ENCODE measurements at regions of chr10 and their contacts with region 1.

Region 1: DNA sequence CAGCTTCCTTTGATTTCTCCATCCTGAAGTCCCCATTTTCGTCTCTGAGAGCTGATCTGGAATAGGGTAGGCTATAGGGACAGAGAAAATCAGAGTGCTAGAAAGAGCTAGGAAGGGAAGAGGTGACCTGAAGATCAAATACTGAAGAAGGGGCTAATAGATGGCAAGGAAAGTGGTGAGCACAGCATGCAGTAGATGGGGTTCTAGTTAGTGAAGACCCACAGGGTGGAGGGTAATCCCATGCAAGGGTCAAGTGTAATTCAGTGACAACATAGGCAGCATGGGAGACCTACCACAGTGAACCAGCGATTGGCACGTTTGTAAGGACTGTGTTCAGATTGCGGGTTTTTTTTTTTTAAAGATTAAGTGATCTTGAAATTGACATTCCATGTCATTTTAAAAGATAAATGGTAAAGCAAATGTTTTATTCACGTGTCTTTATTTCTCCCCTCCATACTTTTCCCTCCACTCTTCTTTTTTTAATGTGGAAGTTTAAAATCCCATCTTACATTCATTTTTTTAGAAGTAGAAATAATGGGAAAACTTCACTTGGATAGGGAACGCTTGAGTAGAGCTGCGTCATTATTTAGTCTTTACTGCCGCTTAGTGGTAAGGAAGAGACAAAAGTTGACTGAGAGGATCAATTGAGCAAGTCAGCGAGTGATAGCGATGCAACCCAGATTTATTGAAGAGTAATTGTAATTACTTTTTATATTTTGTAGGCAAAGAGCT is 21.0 kb upstream of the ABI1 start:
- DNase-seq: no peak
- ATAC-seq: peak; percentile 94
- H3K4me3 Mint-ChIP-seq: peak overlapping the region; percentile 41
- H3K27ac Mint-ChIP-seq: peak overlapping the region; percentile 17; the same call in 1 of the 2 replicates
- H3K4me1 Mint-ChIP-seq: no peaks in the 10 kb centered on the region
- H3K27me3 Mint-ChIP-seq: no peaks in the 10 kb centered on the region
- CTCF ChIP-seq: peak; percentile 31; the same call in 1 of the 2 replicates

Region 2: GRCh38 chr10:26931223-26931622 is 49.5 kb after region 1 on chr10:
- CTCF ChIA-PET with region 1: no interaction called
- POLR2A ChIA-PET with region 1: no interaction called
- DNase-seq: peak; percentile 80
- ATAC-seq: peak; percentile 99
- H3K4me3 Mint-ChIP-seq: peak overlapping the region; percentile 60
- H3K27ac Mint-ChIP-seq: no peak overlapping the region
- H3K4me1 Mint-ChIP-seq: peaks cover 10% of the 10 kb centered on the region
- H3K27me3 Mint-ChIP-seq: no peaks in the 10 kb centered on the region
- CTCF ChIP-seq: no peak

Region 3: GRCh38 chr10:26977635-26978034 is 95.9 kb after region 1 on chr10:
- CTCF ChIA-PET with region 1: interaction called, 10 read pairs
- POLR2A ChIA-PET with region 1: no interaction called
- DNase-seq: no peak
- ATAC-seq: no peak
- H3K4me3 Mint-ChIP-seq: no peak overlapping the region
- H3K27ac Mint-ChIP-seq: no peak overlapping the region
- H3K4me1 Mint-ChIP-seq: peaks cover 14% of the 10 kb centered on the region
- H3K27me3 Mint-ChIP-seq: peaks cover 8% of the 10 kb centered on the region
- CTCF ChIP-seq: no peak

Measured in WTC11 (cell line).